ENCODE measurements at regions of chr16 and their contacts with region 1.

Region 1: DNA sequence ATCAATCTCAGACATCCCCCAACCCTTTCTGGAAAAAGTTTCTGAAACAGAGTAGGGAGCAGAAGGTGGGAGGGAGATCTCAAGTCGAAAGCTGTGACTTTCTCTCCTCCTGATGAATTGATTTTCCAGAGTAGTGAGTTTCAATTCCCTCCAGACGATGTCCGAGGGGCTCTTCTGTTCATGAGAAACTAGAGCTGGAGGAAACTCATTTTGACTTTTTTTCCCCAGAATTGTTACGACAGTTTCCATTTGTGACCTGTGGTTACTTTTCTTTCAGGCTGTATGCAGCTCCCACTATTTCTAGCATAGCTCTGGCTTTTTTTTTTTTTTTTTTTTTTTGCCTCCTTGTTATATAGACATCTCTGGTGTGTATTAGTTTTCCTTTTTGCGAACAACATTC is 422.1 kb upstream of the SALL1 start:
- DNase-seq: no peak
- H3K4me3 ChIP-seq: no peak overlapping the region
- H3K27ac ChIP-seq: no peak overlapping the region
- H3K4me1 ChIP-seq: no peaks in the 10 kb centered on the region
- CTCF ChIP-seq: no peak

Region 2: DNA sequence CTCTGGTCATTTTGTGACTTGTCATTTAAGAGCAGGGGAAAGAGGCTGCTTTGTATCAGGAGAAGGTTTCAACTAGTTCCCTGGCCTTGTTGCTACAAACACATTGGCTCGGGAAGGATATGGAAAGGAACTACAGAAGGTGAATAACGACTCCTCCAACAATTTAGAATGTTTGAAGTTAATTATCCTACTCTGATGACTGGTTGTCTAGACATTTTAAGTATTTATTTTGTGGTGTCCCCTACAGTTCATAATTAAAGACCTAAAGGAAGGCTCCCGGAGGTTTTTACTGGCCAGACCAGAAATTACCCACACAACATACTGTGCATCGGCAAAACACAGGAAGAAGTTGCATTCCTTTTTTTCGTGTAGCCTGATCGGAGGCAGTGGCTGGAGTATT is 93.6 kb after region 1 on chr16:
- CTCF ChIA-PET with region 1: no interaction called
- POLR2A ChIA-PET with region 1: interaction called, 10 read pairs
- intact Hi-C with region 1: no loop called
- DNase-seq: no peak
- H3K4me3 ChIP-seq: no peak overlapping the region
- H3K27ac ChIP-seq: no peak overlapping the region
- H3K4me1 ChIP-seq: no peaks in the 10 kb centered on the region
- CTCF ChIP-seq: no peak

Measured in OCI-LY7 (cell line).